ENCODE measurements at regions of chr3 and their contacts with region 1.

Region 1: DNA sequence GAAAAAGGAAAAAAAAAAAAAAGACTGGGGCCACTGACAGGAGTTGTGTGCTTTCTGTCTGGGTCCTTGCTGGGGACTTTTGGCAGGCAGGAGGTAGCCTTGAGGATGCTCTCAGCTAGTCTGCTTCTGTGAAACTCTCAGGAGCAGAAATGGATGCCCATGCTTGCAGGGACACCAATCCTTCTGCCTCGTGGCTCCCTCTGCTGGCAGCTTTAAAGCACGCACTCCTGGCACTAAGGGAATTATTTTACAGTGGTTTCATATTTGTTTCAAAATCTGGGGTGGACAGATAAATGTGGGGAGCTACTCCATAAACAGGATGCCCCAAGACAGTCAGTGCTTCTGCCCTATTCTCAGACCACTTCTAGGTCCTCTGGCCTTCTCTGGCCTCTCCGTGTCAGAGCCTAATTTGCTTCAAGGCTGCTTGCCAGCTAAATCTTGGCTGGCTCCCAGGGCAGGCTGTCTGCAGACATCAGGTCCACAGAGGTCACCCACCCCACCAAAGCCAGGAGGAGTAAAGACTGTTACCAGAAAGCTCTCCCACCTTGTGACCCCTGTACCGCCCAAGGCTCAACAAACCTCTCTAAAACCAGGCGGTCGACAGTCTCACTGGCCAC is 17.1 kb downstream of the TRAIP start:
- DNase-seq: peak; percentile 81 to 94
- H3K4me3 ChIP-seq: no peak overlapping the region
- H3K27ac ChIP-seq: peak overlapping the region in 1 of 5 donors; percentile 11
- H3K4me1 ChIP-seq: peaks cover 0 to 21% (median 12%) of the 10 kb centered on the region in 4 donors
- H3K27me3 ChIP-seq: no peaks in the 10 kb centered on the region
- CTCF ChIP-seq: peak in 5 of 7 experiments; percentile 82 to 92 (median 83)
- EP300 ChIP-seq: no peak
- POLR2A ChIP-seq: no peak

Region 2: DNA sequence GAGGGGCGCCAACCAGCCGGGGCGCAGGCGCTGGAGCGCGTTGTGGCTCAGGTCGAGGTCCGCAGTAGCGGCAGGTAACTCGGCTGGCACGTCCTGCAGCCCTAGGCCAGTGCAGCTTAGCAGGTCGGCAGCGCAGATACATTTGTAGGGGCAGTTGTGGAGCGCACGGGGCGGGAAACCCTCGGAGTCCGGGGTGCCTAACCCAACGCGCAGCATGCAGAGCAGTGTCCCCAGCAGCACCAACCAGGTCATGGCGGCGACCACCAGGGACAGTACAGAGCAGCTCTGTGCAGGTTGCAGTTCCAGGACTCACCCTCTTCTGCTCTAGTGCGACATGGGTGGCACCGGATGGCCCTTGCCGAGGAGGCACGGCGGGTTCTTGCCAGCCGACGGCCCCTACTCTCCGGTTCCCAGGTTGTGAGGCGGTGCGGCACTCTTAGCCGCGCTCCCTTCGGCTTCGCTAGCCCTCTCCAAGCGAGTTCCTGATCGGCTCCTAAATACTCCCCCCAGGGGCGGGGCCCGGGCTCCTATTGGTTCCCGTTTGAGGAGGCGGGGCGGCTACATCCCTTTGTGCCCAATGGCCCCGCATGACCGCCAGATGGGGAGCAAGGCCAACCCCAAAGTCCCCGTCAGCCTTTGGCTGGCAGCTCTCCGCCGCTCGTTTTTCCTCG is 120.0 kb before region 1 on chr3 and contains the start of gene AMIGO3:
- intact Hi-C with region 1: loop called (anchors 10 kb)
- DNase-seq: peak; percentile 97
- H3K4me3 ChIP-seq: peak within 1 kb of the TSS; percentile 55 to 60 (median 58)
- H3K27ac ChIP-seq: peak within 1 kb of the TSS; percentile 60 to 79 (median 70)
- H3K4me1 ChIP-seq: peaks cover 28 to 60% (median 51%) of the 10 kb centered on the region in 4 donors
- H3K27me3 ChIP-seq: no peaks in the 10 kb centered on the region
- CTCF ChIP-seq: peak in 5 of 7 experiments; percentile 24 to 57 (median 49)
- EP300 ChIP-seq: no peak
- POLR2A ChIP-seq: peak in 1 of 4 donors; percentile 51
- total RNA-seq, gene AMIGO3: 1.3 TPM in 1 of 5 donors, not detected in the others

Region 3: DNA sequence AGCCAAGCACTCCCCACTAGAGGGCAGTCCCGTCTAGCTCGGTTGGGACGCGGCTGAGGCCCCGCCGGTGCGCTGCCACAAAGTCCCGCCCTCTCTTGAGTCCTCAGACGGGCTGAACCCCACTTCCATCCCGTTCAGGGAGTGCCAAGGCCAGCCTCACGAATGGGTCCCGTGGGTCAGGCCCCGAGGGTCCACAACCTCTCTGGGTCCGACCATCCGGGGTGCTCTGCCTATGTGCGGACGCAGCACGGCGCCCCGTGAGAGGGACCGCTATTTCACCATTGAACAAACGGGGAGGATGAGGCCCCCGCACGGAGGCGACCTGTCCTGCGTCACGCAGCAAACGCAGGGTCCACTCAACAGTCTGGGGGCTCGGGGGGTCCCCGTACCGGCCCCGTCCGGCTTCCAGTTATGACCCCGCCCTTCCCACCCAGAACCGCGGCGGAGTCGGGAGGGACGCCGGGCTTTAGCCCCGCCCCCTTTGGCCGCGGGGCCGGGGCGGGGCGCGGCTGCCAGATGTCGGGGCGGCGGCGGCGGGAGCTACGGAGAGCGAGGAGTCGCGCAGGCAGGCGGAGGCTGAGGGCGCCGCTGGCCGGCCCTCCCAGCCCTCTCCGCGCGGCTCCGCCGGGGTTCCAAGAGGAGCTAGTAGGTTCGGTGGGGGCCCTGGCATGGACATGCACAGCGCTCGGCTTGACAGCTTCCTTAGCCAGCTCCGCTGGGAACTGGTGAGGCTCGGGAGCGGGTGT is 36.4 kb before region 1 on chr3 and contains the start of gene INKA1:
- intact Hi-C with region 1: loop called (anchors 2 kb)
- DNase-seq: peak; percentile 91 to 96
- H3K4me3 ChIP-seq: peak within 1 kb of the TSS; percentile 83 to 89 (median 86)
- H3K27ac ChIP-seq: peak within 1 kb of the TSS; percentile 85 to 94 (median 89)
- H3K4me1 ChIP-seq: peaks cover 40 to 71% (median 57%) of the 10 kb centered on the region in 4 donors
- H3K27me3 ChIP-seq: no peaks in the 10 kb centered on the region
- CTCF ChIP-seq: peak in 4 of 7 experiments; percentile 81 to 87 (median 84)
- EP300 ChIP-seq: no peak
- POLR2A ChIP-seq: no peak
- total RNA-seq, gene INKA1: 1.8 to 3.3 (median 2.3) TPM in 3 of 5 donors, not detected in the others

Region 4: GRCh38 chr3:50154840-50155474 is 315.7 kb after region 1 on chr3 and contains the start of gene SEMA3F:
- intact Hi-C with region 1: no loop called
- DNase-seq: peak; percentile 83 to 92
- H3K4me3 ChIP-seq: peak within 1 kb of the TSS; percentile 59 to 73 (median 64)
- H3K27ac ChIP-seq: peak within 1 kb of the TSS; percentile 82 to 90 (median 85)
- H3K4me1 ChIP-seq: peaks cover 39 to 76% (median 72%) of the 10 kb centered on the region in 4 donors
- H3K27me3 ChIP-seq: peaks cover 0 to 39% (median 12%) of the 10 kb centered on the region in 3 donors
- CTCF ChIP-seq: no peak
- EP300 ChIP-seq: no peak
- POLR2A ChIP-seq: no peak
- total RNA-seq, gene SEMA3F: 11.9 to 34.5 (median 31.2) TPM